ENCODE measurements at regions of chr12 and their contacts with region 1.

Region 1: DNA sequence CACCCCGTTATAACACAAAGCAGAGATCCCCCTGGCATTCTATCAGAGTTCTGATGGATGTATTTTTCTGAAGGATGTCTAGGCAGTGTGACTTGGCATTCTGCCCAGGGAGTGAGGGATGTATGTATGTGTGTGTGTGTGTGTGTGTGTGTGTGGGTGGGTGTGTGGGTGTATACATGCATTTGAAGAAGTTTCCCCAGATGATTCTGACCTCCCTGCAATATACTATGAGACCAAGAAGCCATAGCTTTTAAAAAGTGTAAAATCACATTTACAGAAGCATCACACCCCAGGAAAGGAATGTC is 59.7 kb upstream of the NAP1L1 start:
- DNase-seq: peak; percentile 23
- H3K4me3 Mint-ChIP-seq: no peak overlapping the region
- H3K27ac Mint-ChIP-seq: no peak overlapping the region
- H3K4me1 Mint-ChIP-seq: peaks cover 23% of the 10 kb centered on the region
- H3K27me3 Mint-ChIP-seq: no peaks in the 10 kb centered on the region

Region 2: DNA sequence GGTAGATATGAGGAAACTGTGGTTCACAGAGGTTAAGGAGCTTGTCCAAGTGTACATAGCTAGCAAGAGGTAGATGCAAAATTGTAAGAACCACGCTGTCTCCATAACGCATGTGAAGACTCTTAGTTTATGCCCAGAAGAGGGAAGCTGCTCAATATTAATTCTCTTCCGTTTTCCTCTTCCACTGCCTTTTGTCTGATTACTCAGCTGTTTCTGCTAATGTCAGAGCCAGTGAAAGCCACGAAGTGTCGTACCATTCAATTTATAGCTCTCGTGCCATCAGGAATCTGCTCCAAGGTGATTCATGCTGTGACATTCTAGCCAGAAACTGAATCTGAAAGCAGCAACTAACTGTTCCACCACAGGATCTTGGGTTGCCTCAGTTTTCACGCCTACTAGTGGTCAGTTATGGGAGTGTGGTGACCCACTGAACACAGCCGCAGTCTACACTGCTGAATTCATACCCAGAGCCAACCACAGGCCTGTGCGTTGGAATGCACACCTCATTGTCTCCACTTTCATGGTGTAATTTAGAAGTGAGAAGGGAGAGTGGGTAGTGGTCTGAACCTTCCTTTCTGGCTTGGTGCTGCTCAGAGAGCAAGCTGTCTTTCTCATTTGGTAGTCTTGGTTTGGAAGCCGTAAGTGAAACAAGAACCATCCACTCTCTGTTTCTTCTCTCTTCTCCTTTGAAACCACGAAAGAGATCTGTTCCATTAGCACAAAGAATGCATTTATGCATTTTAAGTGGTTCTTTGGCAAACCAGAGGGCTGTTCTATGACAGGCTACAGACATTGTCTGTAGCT is 14.5 kb after region 1 on chr12:
- CTCF ChIA-PET with region 1: interaction called, 10 read pairs
- DNase-seq: peak; percentile 72
- H3K4me3 Mint-ChIP-seq: peak overlapping the region; percentile 30
- H3K27ac Mint-ChIP-seq: no peak overlapping the region
- H3K4me1 Mint-ChIP-seq: peaks cover 9% of the 10 kb centered on the region
- H3K27me3 Mint-ChIP-seq: no peaks in the 10 kb centered on the region